ENCODE measurements at regions of chr18 and their contacts with region 1.

Region 1: DNA sequence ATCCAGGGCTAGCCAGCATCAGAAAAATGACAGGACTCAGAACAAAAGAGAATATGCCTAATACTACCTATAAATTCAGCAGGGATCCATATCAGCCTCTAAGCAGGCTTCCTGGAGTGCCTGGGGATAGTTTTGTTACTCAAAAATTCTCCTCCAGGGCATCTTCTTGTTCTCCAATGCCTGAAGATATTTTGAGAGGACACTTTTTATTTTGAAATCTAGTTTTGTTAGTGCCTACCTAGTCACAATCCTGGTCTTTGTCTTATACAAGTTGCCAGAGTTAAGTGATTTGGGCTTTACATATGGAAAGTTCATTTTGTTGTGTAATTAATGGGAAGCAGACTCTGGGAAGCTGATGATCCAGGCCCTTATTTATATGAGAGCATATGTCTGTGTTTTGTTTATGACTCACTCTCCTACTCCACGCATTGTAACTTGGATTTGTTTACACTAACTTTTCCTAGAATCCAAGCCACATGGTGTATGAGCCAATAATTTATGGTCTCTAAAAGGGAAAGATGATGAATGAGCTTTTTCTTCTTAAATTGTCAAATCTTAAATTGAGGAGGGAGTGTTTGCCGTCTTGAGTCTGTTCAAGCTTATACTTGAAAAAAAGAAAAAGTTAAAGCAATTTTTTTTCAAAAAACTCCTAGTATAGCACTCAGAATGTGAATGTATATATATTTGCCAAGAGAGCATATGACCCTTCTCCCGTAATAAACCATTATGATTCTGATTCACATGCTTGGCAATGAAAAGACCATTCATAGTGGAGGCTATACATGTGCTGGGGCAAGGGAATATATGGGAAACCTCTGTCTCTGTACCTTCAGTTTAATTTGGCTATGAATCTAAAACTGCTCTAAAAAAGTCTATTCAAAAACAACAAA is 370.3 kb downstream of the SETBP1 start:
- DNase-seq: peak; percentile 96
- ATAC-seq: peak; percentile 90
- H3K4me3 ChIP-seq: no peak overlapping the region
- H3K27ac ChIP-seq: peak overlapping the region; percentile 83; the same call in 1 of the 2 replicates
- H3K4me1 ChIP-seq: peaks cover 8% of the 10 kb centered on the region
- H3K27me3 ChIP-seq: peaks cover 2% of the 10 kb centered on the region; the same call in 1 of the 2 replicates
- CTCF ChIP-seq: no peak
- POLR2A ChIP-seq: no peak
- RAD21 ChIP-seq: no peak

Region 2: GRCh38 chr18:44838971-44839666 is 211.8 kb before region 1 on chr18:
- CTCF ChIA-PET with region 1: no interaction called
- POLR2A ChIA-PET with region 1: no interaction called
- dilution Hi-C with region 1: no loop called
- in situ Hi-C with region 1: no loop called
- intact Hi-C with region 1: no loop called
- DNase-seq: peak; percentile 43
- ATAC-seq: peak; percentile 74; the same call in 1 of the 2 replicates
- H3K4me3 ChIP-seq: no peak overlapping the region
- H3K27ac ChIP-seq: no peak overlapping the region
- H3K4me1 ChIP-seq: peaks cover 6% of the 10 kb centered on the region; the same call in 1 of the 2 replicates
- H3K27me3 ChIP-seq: no peaks in the 10 kb centered on the region
- CTCF ChIP-seq: no peak
- POLR2A ChIP-seq: no peak
- RAD21 ChIP-seq: no peak

Region 3: GRCh38 chr18:44852818-44853217 is 198.1 kb before region 1 on chr18:
- CTCF ChIA-PET with region 1: no interaction called
- POLR2A ChIA-PET with region 1: no interaction called
- dilution Hi-C with region 1: no loop called
- in situ Hi-C with region 1: no loop called
- intact Hi-C with region 1: no loop called
- DNase-seq: peak; percentile 1
- ATAC-seq: no peak; the same call in 1 of the 2 replicates
- H3K4me3 ChIP-seq: no peak overlapping the region
- H3K27ac ChIP-seq: no peak overlapping the region
- H3K4me1 ChIP-seq: no peaks in the 10 kb centered on the region; the same call in 1 of the 2 replicates
- H3K27me3 ChIP-seq: no peaks in the 10 kb centered on the region; the same call in 1 of the 2 replicates
- CTCF ChIP-seq: no peak
- POLR2A ChIP-seq: no peak
- RAD21 ChIP-seq: no peak

Region 4: GRCh38 chr18:45106331-45106774 is 55.4 kb after region 1 on chr18:
- CTCF ChIA-PET with region 1: no interaction called
- POLR2A ChIA-PET with region 1: no interaction called
- dilution Hi-C with region 1: no loop called
- in situ Hi-C with region 1: no loop called
- intact Hi-C with region 1: no loop called
- DNase-seq: no peak
- ATAC-seq: no peak
- H3K4me3 ChIP-seq: no peak overlapping the region
- H3K27ac ChIP-seq: no peak overlapping the region
- H3K4me1 ChIP-seq: no peaks in the 10 kb centered on the region
- H3K27me3 ChIP-seq: peaks cover 9% of the 10 kb centered on the region
- CTCF ChIP-seq: no peak
- POLR2A ChIP-seq: no peak
- RAD21 ChIP-seq: no peak

Region 5: GRCh38 chr18:45169610-45170009 is 118.7 kb after region 1 on chr18:
- CTCF ChIA-PET with region 1: no interaction called
- POLR2A ChIA-PET with region 1: no interaction called
- dilution Hi-C with region 1: no loop called
- in situ Hi-C with region 1: no loop called
- intact Hi-C with region 1: loop called (anchors 5 kb)
- DNase-seq: peak; percentile 90
- ATAC-seq: peak; percentile 56
- H3K4me3 ChIP-seq: no peak overlapping the region
- H3K27ac ChIP-seq: no peak overlapping the region
- H3K4me1 ChIP-seq: peaks cover 25% of the 10 kb centered on the region
- H3K27me3 ChIP-seq: no peaks in the 10 kb centered on the region
- CTCF ChIP-seq: no peak
- POLR2A ChIP-seq: no peak
- RAD21 ChIP-seq: no peak

Region 6: DNA sequence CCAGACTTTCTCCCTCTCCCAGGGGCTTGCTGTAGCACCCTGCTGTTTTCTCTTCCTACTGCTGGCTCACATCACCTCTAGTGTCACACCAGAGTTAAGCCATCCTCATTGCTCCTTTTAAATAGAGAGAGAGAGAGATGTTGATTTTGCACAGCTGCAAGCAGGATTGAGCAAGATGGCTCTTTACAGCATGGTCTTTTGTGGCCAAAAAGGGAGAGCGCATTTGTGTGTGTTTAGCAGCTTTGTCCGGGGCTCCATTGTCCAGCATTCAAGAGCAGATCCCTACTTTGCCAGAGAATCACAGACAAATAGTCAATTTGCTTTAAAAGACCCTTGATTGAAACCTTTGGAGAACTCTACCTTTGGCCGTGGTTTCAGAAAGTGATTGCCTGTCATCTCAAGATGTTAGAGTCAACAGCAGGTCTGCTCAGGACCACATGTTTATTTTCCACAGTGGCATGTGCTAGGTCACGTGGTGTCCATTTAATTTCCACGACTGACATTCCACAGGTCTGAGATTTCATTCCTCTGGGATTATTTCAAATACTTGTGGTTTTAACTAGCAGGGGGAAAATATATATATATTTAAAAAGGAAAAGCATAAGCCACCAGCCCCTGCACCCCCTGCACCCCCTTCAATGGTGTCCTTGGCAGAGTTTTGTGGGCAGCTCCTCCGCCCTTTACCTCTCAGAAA is 204.4 kb after region 1 on chr18:
- CTCF ChIA-PET with region 1: no interaction called
- POLR2A ChIA-PET with region 1: no interaction called
- dilution Hi-C with region 1: no loop called
- in situ Hi-C with region 1: no loop called
- intact Hi-C with region 1: loop called (anchors 2 kb)
- DNase-seq: peak; percentile 92
- ATAC-seq: peak; percentile 84
- H3K4me3 ChIP-seq: no peak overlapping the region
- H3K27ac ChIP-seq: peak overlapping the region; percentile 98
- H3K4me1 ChIP-seq: peaks cover 27% of the 10 kb centered on the region
- H3K27me3 ChIP-seq: no peaks in the 10 kb centered on the region
- CTCF ChIP-seq: no peak
- POLR2A ChIP-seq: no peak
- RAD21 ChIP-seq: no peak

Region 7: GRCh38 chr18:45370255-45371010 is 319.5 kb after region 1 on chr18:
- CTCF ChIA-PET with region 1: no interaction called
- POLR2A ChIA-PET with region 1: no interaction called
- dilution Hi-C with region 1: no loop called
- in situ Hi-C with region 1: no loop called
- intact Hi-C with region 1: no loop called
- DNase-seq: no peak
- ATAC-seq: no peak
- H3K4me3 ChIP-seq: no peak overlapping the region
- H3K27ac ChIP-seq: no peak overlapping the region
- H3K4me1 ChIP-seq: peaks cover 5% of the 10 kb centered on the region; the same call in 1 of the 2 replicates
- H3K27me3 ChIP-seq: peaks cover 2% of the 10 kb centered on the region; the same call in 1 of the 2 replicates
- CTCF ChIP-seq: no peak
- POLR2A ChIP-seq: no peak
- RAD21 ChIP-seq: no peak

Measured in IMR-90 (cell line).